Heart right ventricle (tissue), 16 donors: ENCODE measurements at regions of chrX and their contacts with region 1.

Region 1: DNA sequence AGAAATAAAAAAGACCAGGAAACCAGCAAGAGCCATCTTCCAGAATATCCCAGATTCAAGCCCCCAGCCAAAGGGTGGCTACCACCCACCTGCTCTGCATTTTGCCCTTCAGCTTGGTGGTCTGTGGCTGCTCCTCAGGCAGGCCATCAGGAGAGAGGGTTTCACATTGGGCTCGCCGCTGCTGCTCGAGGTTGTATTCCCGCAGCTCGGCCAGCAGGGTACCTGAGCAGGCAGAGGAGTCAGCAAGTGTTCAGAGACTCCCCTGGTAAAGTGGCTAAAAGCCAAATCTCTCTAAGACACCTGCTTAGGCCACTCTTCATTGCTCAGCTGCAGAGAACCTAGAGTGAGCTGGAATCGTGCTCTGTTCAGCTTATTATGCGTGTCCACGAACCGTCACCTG is 110.8 kb upstream of the HSD17B10 start:
- DNase-seq: no peak
- ATAC-seq: no peak
- H3K4me3 ChIP-seq: no peak overlapping the region
- H3K27ac ChIP-seq: no peak overlapping the region
- H3K4me1 ChIP-seq: no peaks in the 10 kb centered on the region
- H3K27me3 ChIP-seq: peaks cover 0 to 24% (median 0%) of the 10 kb centered on the region in 7 donors
- CTCF ChIP-seq: no peak

Region 2: GRCh38 chrX:53654376-53654775 is 109.4 kb after region 1 on chrX:
- intact Hi-C with region 1: loop called in 1 of 10 experiments (anchors 1 kb)
- DNase-seq: no peak
- ATAC-seq: no peak
- H3K4me3 ChIP-seq: no peak overlapping the region
- H3K27ac ChIP-seq: no peak overlapping the region
- H3K4me1 ChIP-seq: peaks cover 0 to 22% (median 10%) of the 10 kb centered on the region in 9 donors
- H3K27me3 ChIP-seq: peaks cover 0 to 36% (median 0%) of the 10 kb centered on the region in 7 donors
- CTCF ChIP-seq: no peak